A549 (cell line): ENCODE measurements at regions of chr4 and their contacts with region 1.

Region 1: GRCh38 chr4:185640811-185641675 is 105.7 kb upstream of the PDLIM3 start:
- DNase-seq: peak; percentile 15 to 70
- ATAC-seq: no peak
- H3K4me3 ChIP-seq: no peak overlapping the region
- H3K27ac ChIP-seq: no peak overlapping the region
- H3K4me1 ChIP-seq: no peaks in the 10 kb centered on the region
- CTCF ChIP-seq: peak; percentile 56
- EP300 ChIP-seq: no peak
- POLR2A ChIP-seq: no peak
- RAD21 ChIP-seq: peak; percentile 59

Region 2: DNA sequence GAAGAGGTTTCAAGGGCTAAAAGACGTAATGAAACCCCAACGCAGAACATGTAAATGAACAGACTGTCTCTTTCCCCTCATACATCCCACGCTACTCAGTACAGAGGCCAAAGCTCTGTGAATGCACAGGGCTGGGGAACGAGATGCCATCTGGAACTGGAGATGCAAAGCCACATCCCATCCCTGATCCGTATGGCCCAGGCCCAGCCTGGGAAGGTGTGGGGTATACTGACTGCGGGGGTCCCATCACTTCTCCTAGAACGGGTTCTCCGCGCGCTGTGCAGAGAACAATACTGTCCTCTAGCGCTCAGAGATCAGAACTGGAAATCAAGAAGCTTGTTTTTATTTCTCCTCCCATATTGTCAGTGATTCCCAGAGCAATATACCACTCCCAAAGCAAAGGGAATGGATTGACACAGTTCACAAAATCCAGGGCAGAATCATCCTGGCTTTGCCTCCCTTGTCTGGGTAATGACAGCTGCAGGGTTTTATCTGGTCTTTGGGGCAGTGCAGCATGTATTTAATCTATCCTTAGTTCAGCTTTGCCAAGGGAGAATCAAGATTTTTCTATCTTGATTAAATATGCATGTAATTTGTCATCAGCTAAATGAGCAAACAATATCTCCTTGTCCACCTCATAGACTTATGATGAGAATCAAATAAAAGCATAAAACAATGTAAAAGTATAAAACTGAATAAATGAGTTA is 380.6 kb after region 1 on chr4:
- CTCF ChIA-PET with region 1: interaction called, 110 read pairs
- POLR2A ChIA-PET with region 1: no interaction called
- DNase-seq: peak; percentile 14 to 21
- ATAC-seq: peak; percentile 62 to 82
- H3K4me3 ChIP-seq: no peak overlapping the region
- H3K27ac ChIP-seq: no peak overlapping the region
- H3K4me1 ChIP-seq: no peaks in the 10 kb centered on the region
- CTCF ChIP-seq: peak; percentile 72
- EP300 ChIP-seq: no peak
- POLR2A ChIP-seq: no peak
- RAD21 ChIP-seq: peak; percentile 85

Region 3: DNA sequence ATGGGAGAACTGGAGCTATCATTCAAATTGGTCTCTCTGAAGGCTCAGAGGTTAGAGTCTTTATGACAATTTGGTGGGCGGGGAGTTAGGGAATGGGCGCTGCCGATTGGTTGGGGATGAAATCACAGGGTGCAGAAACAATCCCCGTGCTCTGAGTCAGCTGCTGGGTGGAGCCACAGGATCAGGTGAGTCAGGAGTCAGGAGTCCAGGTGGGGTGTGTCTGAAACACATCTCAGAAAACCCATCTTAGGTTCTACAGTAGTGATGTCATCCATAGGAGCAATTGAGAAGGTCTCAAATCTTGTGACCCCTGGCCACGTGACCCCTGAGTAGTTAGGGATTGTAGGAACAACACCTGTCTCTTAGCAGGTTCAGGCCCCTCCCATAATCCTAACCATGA is 386.4 kb after region 1 on chr4:
- CTCF ChIA-PET with region 1: interaction called, 110 read pairs
- POLR2A ChIA-PET with region 1: no interaction called
- DNase-seq: no peak
- ATAC-seq: no peak
- H3K4me3 ChIP-seq: no peak overlapping the region
- H3K27ac ChIP-seq: no peak overlapping the region
- H3K4me1 ChIP-seq: no peaks in the 10 kb centered on the region
- CTCF ChIP-seq: no peak
- EP300 ChIP-seq: no peak
- POLR2A ChIP-seq: no peak
- RAD21 ChIP-seq: no peak